Gastrocnemius medialis (tissue), 4 donors: ENCODE measurements at regions of chr6 and their contacts with region 1.

Region 1: GRCh38 chr6:3052481-3053230 is 15.6 kb upstream of the RIPK1 start:
- DNase-seq: no peak
- ATAC-seq: no peak
- H3K4me3 ChIP-seq: no peak overlapping the region
- H3K27ac ChIP-seq: no peak overlapping the region
- H3K4me1 ChIP-seq: peaks cover 4 to 14% of the 10 kb centered on the region in 2 donors
- H3K27me3 ChIP-seq: no peaks in the 10 kb centered on the region
- CTCF ChIP-seq: no peak
- POLR2A ChIP-seq: no peak

Region 2: GRCh38 chr6:3023663-3024483 is 28.8 kb before region 1 on chr6:
- in situ Hi-C with region 1: no loop called
- intact Hi-C with region 1: loop called (anchors 2 kb)
- DNase-seq: peak; percentile 94 to 97
- ATAC-seq: peak; percentile 84 to 86
- H3K4me3 ChIP-seq: peak overlapping the region; percentile 64 to 79 (median 70)
- H3K27ac ChIP-seq: peak overlapping the region; percentile 93 to 97 (median 94)
- H3K4me1 ChIP-seq: peaks cover 26 to 47% of the 10 kb centered on the region in 2 donors
- H3K27me3 ChIP-seq: no peaks in the 10 kb centered on the region
- CTCF ChIP-seq: no peak
- POLR2A ChIP-seq: peak; percentile 89 to 90